H1 (cell line): ENCODE measurements at regions of chr11 and their contacts with region 1.

Region 1: DNA sequence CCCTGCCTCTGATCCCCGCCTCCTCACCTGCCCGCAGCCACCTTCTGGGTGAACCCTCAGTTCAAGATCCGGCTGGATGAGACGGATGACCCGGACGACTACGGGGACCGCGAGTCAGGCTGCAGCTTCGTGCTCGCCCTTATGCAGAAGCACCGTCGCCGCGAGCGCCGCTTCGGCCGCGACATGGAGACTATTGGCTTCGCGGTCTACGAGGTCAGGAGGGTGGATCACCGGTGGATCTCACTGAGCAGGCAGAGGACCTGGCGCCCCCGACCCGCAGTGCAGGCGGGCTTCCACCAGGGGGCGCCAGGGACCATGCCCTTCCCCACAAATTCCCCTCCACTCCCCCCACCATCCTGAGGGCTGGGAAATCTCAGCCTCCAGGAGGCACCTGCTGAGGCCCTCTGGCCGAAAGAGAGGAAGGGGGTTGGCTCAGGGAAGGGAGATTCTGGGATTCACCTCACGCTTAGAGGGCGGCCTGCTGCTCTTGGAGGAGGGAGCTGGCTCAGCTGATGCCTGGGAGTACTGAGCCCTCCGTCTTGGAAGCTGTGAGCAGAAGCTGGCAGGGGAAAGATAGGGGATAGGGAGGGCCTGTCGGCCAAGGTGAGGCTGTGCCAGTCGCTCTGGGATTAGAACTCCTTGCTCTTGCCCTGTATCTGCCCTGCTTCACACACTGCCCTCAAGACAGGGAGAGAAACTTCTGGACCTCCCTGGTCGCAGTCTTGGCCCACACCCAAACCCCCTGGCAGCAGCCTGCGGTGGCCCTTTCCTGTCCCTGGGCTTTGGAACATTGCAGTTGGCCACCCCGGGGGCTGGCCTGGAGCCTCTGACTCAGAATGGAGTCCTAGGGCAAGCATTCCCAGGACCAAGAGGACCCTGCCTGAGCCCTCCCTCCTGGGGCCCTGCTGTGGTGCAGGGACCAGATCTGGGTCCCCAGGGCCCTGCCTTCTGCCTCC is 23.2 kb downstream of the CAPN1 start:
- DNase-seq: peak in 1 of 2 experiments; percentile 95
- H3K4me3 ChIP-seq: no peak overlapping the region; a peak in 1 of 8 replicates
- H3K27ac ChIP-seq: peak overlapping the region; percentile 60
- H3K4me1 ChIP-seq: peaks cover 0 to 14% (median 10%) of the 10 kb centered on the region in 4 experiments; a peak in 6 of 7 replicates
- H3K27me3 ChIP-seq: no peaks in the 10 kb centered on the region
- CTCF ChIP-seq: peak in 2 of 3 experiments; percentile 97 to 98; a peak in 3 of 4 replicates
- EP300 ChIP-seq: 0 out of 3 replicates have a peak, but pooled peaks of 1 of the 2 experiments have one; percentile 17
- POLR2A ChIP-seq: no peak; a peak in 1 of 3 replicates
- RAD21 ChIP-seq: peak; percentile 95 to 96

Region 2: GRCh38 chr11:65117216-65118096 is 87.5 kb before region 1 on chr11 and contains the start of gene ZNHIT2:
- CTCF ChIA-PET with region 1: interaction called, 3 read pairs
- POLR2A ChIA-PET with region 1: interaction called, 12 read pairs
- DNase-seq: peak; percentile 98 to 99
- H3K4me3 ChIP-seq: peak within 1 kb of the TSS; percentile 61 to 83 (median 72)
- H3K27ac ChIP-seq: peak within 1 kb of the TSS; percentile 78
- H3K4me1 ChIP-seq: peaks cover 2 to 22% (median 13%) of the 10 kb centered on the region in 4 experiments
- H3K27me3 ChIP-seq: no peaks in the 10 kb centered on the region
- CTCF ChIP-seq: peak in 2 of 3 experiments; percentile 79 to 92; a peak in 3 of 4 replicates
- EP300 ChIP-seq: peak in 1 of 2 experiments; percentile 75; a peak in 1 of 3 replicates
- POLR2A ChIP-seq: peak in 1 of 2 experiments; percentile 89; a peak in 2 of 3 replicates
- RAD21 ChIP-seq: peak; percentile 76 to 80
- total RNA-seq, gene ZNHIT2: 13.0 and 14.8 TPM in 2 replicates

Region 3: DNA sequence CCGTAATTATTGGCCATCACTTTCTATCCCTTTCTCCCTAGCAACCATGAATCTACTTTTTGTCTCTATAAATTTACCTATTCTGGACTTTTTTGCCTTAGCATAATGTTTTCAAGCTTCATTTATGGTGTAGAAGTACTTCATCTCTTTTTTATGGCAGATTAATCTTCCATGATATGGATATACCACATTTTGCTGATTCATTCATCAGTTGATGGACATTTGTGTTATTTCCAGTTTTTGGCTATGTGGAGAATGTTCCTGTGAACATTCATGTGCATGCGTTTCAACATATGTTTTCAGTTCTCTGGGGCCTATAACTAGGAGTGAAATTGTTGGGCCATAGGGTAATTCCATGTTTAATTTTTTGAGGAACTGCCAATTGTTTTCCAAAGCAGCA is 10.4 kb before region 1 on chr11:
- CTCF ChIA-PET with region 1: interaction called, 10 read pairs
- POLR2A ChIA-PET with region 1: interaction called, 9 read pairs
- DNase-seq: no peak
- H3K4me3 ChIP-seq: no peak overlapping the region
- H3K27ac ChIP-seq: no peak overlapping the region
- H3K4me1 ChIP-seq: no peaks in the 10 kb centered on the region
- H3K27me3 ChIP-seq: no peaks in the 10 kb centered on the region
- CTCF ChIP-seq: no peak
- EP300 ChIP-seq: no peak
- POLR2A ChIP-seq: no peak
- RAD21 ChIP-seq: no peak

Region 4: GRCh38 chr11:65243773-65244172 is 38.8 kb after region 1 on chr11:
- CTCF ChIA-PET with region 1: interaction called, 169 read pairs
- POLR2A ChIA-PET with region 1: interaction called, 38 read pairs
- DNase-seq: no peak
- H3K4me3 ChIP-seq: no peak overlapping the region
- H3K27ac ChIP-seq: no peak overlapping the region
- H3K4me1 ChIP-seq: peaks cover 3 to 12% (median 5%) of the 10 kb centered on the region in 4 experiments; a peak in 5 of 7 replicates
- H3K27me3 ChIP-seq: no peaks in the 10 kb centered on the region
- CTCF ChIP-seq: no peak
- EP300 ChIP-seq: no peak
- POLR2A ChIP-seq: no peak
- RAD21 ChIP-seq: no peak; a peak in 1 of 4 replicates

Region 5: DNA sequence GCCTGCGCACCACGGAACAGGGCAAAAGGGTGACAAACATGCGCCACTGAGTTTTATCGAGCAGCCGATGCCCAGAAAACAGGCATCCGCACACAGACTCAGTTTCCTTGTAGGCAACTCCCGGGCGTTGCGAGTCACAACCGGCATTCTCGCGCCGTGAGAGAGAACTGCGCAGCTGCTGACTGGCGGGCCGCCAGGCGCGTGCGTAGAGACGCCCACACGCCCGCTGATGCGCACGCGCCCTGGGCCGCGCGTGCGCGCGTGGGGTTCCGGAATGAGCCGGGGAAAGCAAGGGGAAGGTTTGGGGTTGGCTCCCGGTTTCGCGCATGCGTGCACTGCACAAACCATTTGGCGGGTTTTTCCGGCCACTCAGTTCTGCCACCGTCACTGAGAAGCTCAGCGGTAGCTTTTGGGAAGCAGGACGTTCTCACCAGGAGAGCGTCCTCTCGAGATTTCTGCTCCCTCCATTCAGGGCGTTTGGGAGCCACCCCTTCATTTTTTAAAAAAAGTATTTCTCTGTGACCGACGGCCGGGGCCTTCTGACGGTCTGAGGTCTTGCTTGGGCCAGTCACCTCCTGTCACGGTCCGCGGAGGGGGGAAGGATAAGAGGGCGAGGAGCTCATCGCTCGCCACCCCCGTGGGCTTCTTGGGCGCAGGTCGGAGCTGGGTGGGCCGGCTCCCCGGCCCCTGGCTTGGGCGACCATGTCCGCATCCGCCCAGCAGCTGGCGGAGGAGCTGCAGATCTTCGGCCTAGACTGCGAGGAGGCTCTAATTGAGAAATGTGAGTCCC is 56.9 kb after region 1 on chr11 and contains the start of gene POLA2:
- CTCF ChIA-PET with region 1: interaction called, 19 read pairs
- POLR2A ChIA-PET with region 1: no interaction called
- DNase-seq: peak; percentile 86 to 92
- H3K4me3 ChIP-seq: peak within 1 kb of the TSS; percentile 74 to 83 (median 81)
- H3K27ac ChIP-seq: peak within 1 kb of the TSS; percentile 46
- H3K4me1 ChIP-seq: peaks cover 0 to 3% (median under 1%) of the 10 kb centered on the region in 4 experiments; a peak in 2 of 7 replicates
- H3K27me3 ChIP-seq: no peaks in the 10 kb centered on the region
- CTCF ChIP-seq: no peak
- EP300 ChIP-seq: no peak
- POLR2A ChIP-seq: peak in 1 of 2 experiments; percentile 75; a peak in 2 of 3 replicates
- RAD21 ChIP-seq: no peak
- total RNA-seq, gene POLA2: 31.2 and 34.6 TPM in 2 replicates

Region 6: GRCh38 chr11:65329944-65330403 is 125.0 kb after region 1 on chr11:
- CTCF ChIA-PET with region 1: interaction called, 28 read pairs
- POLR2A ChIA-PET with region 1: no interaction called
- DNase-seq: peak in 1 of 2 experiments; percentile 91
- H3K4me3 ChIP-seq: no peak overlapping the region
- H3K27ac ChIP-seq: no peak overlapping the region
- H3K4me1 ChIP-seq: peaks cover 0 to 4% (median 2%) of the 10 kb centered on the region in 4 experiments; a peak in 3 of 7 replicates
- H3K27me3 ChIP-seq: no peaks in the 10 kb centered on the region; a peak in 1 of 7 replicates
- CTCF ChIP-seq: peak; percentile 29 to 79 (median 77)
- EP300 ChIP-seq: no peak
- POLR2A ChIP-seq: no peak
- RAD21 ChIP-seq: peak; percentile 49 to 60